ENCODE measurements at regions of chr17 and their contacts with region 1.

Region 1: GRCh38 chr17:50218771-50219315 is 17.4 kb upstream of the COL1A1 start:
- DNase-seq: peak; percentile 84
- H3K4me3 ChIP-seq: no peak overlapping the region
- H3K27ac ChIP-seq: peak overlapping the region; percentile 93
- H3K4me1 ChIP-seq: peaks cover 53% of the 10 kb centered on the region
- H3K27me3 ChIP-seq: no peaks in the 10 kb centered on the region
- CTCF ChIP-seq: no peak

Region 2: GRCh38 chr17:50318501-50319285 is 99.8 kb after region 1 on chr17:
- CTCF ChIA-PET with region 1: no interaction called
- dilution Hi-C with region 1: loop called (anchors 5 kb)
- in situ Hi-C with region 1: no loop called
- intact Hi-C with region 1: no loop called
- DNase-seq: peak; percentile 73
- H3K4me3 ChIP-seq: no peak overlapping the region
- H3K27ac ChIP-seq: no peak overlapping the region
- H3K4me1 ChIP-seq: peaks cover 33% of the 10 kb centered on the region
- H3K27me3 ChIP-seq: no peaks in the 10 kb centered on the region
- CTCF ChIP-seq: peak in 1 of 2 donors; percentile 57

Measured in mammary epithelial cell (primary cell).